Activated naive CD4-positive, alpha-beta T cell treated with anti-CD3 and anti-CD28 coated beads for 36 hours (primary cell): ENCODE measurements at regions of chr9 and their contacts with region 1.

Region 1: GRCh38 chr9:99184475-99185347 is 37.0 kb downstream of the ALG2 start:
- DNase-seq: peak; percentile 87
- H3K4me3 Mint-ChIP-seq: no peak overlapping the region
- H3K27ac Mint-ChIP-seq: peak overlapping the region; percentile 64
- H3K4me1 Mint-ChIP-seq: peaks cover 34% of the 10 kb centered on the region
- H3K27me3 Mint-ChIP-seq: peaks cover 3% of the 10 kb centered on the region

Region 2: DNA sequence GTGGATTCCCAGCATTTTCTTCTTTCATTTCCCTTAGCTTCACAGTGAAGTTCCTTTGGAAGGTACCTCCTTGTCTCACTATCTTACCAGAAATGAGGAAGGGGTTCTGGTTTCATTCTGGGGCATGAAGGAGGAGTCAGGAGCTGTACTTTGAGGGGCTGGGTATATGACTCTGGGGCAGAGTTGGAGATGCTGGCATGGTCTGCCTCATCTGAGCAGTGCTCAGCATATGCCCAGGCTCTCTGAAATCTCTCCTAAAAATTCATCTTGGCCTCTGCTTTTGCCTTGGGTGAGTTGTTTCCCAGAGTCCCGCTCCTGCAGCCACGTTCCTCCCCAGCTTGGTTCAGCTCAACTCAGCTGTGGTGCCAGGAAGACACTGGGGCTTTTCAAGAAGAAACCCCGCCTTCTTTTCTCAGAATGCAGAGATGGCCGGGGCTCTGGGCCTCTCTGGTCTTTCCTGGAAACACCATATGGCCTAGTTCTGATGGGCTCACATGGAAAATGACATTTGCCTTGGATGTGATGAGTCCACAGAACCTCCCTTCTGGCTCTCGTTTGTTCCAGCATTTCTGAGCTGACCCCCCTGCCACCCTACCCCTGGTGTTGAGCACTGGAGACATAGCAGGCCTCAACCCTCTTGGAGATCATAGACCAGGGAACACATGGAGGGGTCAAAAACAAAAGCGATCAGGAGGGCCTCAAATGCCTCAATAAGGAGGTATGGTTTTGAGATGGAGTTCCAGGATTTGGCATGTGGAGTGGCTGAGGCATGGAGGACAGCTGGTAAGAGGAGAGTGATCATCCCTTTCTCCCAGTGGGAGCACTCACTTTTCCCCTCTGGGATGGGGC is 91.8 kb before region 1 on chr9:
- CTCF ChIA-PET with region 1: no interaction called
- intact Hi-C with region 1: no loop called
- DNase-seq: peak; percentile 60
- H3K4me3 Mint-ChIP-seq: no peak overlapping the region
- H3K27ac Mint-ChIP-seq: peak overlapping the region; percentile 9
- H3K4me1 Mint-ChIP-seq: peaks cover 21% of the 10 kb centered on the region
- H3K27me3 Mint-ChIP-seq: no peaks in the 10 kb centered on the region

Region 3: GRCh38 chr9:99173570-99174504 is 10.9 kb before region 1 on chr9:
- CTCF ChIA-PET with region 1: interaction called, 18 read pairs
- intact Hi-C with region 1: no loop called
- DNase-seq: no peak
- H3K4me3 Mint-ChIP-seq: no peak overlapping the region
- H3K27ac Mint-ChIP-seq: no peak overlapping the region
- H3K4me1 Mint-ChIP-seq: peaks cover 2% of the 10 kb centered on the region
- H3K27me3 Mint-ChIP-seq: no peaks in the 10 kb centered on the region

Region 4: GRCh38 chr9:99221621-99222415 is 37.1 kb after region 1 on chr9 and contains the starts of genes ALG2 and SEC61B:
- CTCF ChIA-PET with region 1: interaction called, 15 read pairs
- intact Hi-C with region 1: loop called (anchors 1 kb)
- DNase-seq: peak; percentile 94
- H3K4me3 Mint-ChIP-seq: peak within 1 kb of the TSS; percentile 97
- H3K27ac Mint-ChIP-seq: peak within 1 kb of the TSS; percentile 98
- H3K4me1 Mint-ChIP-seq: peaks cover 56% of the 10 kb centered on the region
- H3K27me3 Mint-ChIP-seq: no peaks in the 10 kb centered on the region
- total RNA-seq, gene ALG2: 11.3 to 11.8 TPM
- total RNA-seq, gene SEC61B: 105 TPM

Region 5: GRCh38 chr9:99266255-99267023 is 81.7 kb after region 1 on chr9:
- CTCF ChIA-PET with region 1: interaction called, 5 read pairs
- intact Hi-C with region 1: loop called (anchors 1 kb)
- DNase-seq: peak; percentile 82
- H3K4me3 Mint-ChIP-seq: peak overlapping the region; percentile 19
- H3K27ac Mint-ChIP-seq: no peak overlapping the region
- H3K4me1 Mint-ChIP-seq: peaks cover 17% of the 10 kb centered on the region
- H3K27me3 Mint-ChIP-seq: peaks cover 1% of the 10 kb centered on the region

Region 6: GRCh38 chr9:99549441-99549840 is 364.7 kb after region 1 on chr9:
- CTCF ChIA-PET with region 1: no interaction called
- intact Hi-C with region 1: no loop called
- DNase-seq: no peak
- H3K4me3 Mint-ChIP-seq: no peak overlapping the region
- H3K27ac Mint-ChIP-seq: no peak overlapping the region
- H3K4me1 Mint-ChIP-seq: no peaks in the 10 kb centered on the region
- H3K27me3 Mint-ChIP-seq: peaks cover 15% of the 10 kb centered on the region

Region 7: GRCh38 chr9:99579964-99580363 is 395.3 kb after region 1 on chr9:
- CTCF ChIA-PET with region 1: no interaction called
- intact Hi-C with region 1: no loop called
- DNase-seq: no peak
- H3K4me3 Mint-ChIP-seq: no peak overlapping the region
- H3K27ac Mint-ChIP-seq: no peak overlapping the region
- H3K4me1 Mint-ChIP-seq: no peaks in the 10 kb centered on the region
- H3K27me3 Mint-ChIP-seq: peaks cover 2% of the 10 kb centered on the region

Region 8: DNA sequence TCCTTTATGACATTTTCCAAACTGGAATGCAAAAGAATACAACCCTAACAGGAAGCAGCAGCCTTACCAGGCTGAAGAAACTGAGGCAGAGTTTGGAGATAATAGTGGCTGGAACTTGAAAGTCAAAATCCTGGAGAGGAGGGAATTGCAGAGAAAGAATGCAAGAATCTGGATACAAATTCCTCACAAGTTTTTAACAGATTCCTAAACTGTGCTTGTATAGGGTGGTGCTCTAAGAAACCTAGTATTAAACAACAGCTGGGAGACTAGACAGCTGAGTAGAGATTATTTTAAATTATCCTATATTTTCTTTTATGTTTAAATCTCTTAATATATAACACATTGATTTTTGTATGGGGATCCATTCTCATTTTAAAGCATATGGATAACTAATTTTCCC is 945.1 kb after region 1 on chr9:
- CTCF ChIA-PET with region 1: no interaction called
- intact Hi-C with region 1: no loop called
- DNase-seq: no peak
- H3K4me3 Mint-ChIP-seq: no peak overlapping the region
- H3K27ac Mint-ChIP-seq: no peak overlapping the region
- H3K4me1 Mint-ChIP-seq: peaks cover 2% of the 10 kb centered on the region
- H3K27me3 Mint-ChIP-seq: no peaks in the 10 kb centered on the region

Region 9: GRCh38 chr9:100216178-100216787 is 1031.6 kb after region 1 on chr9:
- CTCF ChIA-PET with region 1: no interaction called
- intact Hi-C with region 1: loop called (anchors 5 kb)
- DNase-seq: peak; percentile 83
- H3K4me3 Mint-ChIP-seq: no peak overlapping the region
- H3K27ac Mint-ChIP-seq: no peak overlapping the region
- H3K4me1 Mint-ChIP-seq: no peaks in the 10 kb centered on the region
- H3K27me3 Mint-ChIP-seq: no peaks in the 10 kb centered on the region